ENCODE measurements at regions of chr1 and their contacts with region 1.

Region 1: DNA sequence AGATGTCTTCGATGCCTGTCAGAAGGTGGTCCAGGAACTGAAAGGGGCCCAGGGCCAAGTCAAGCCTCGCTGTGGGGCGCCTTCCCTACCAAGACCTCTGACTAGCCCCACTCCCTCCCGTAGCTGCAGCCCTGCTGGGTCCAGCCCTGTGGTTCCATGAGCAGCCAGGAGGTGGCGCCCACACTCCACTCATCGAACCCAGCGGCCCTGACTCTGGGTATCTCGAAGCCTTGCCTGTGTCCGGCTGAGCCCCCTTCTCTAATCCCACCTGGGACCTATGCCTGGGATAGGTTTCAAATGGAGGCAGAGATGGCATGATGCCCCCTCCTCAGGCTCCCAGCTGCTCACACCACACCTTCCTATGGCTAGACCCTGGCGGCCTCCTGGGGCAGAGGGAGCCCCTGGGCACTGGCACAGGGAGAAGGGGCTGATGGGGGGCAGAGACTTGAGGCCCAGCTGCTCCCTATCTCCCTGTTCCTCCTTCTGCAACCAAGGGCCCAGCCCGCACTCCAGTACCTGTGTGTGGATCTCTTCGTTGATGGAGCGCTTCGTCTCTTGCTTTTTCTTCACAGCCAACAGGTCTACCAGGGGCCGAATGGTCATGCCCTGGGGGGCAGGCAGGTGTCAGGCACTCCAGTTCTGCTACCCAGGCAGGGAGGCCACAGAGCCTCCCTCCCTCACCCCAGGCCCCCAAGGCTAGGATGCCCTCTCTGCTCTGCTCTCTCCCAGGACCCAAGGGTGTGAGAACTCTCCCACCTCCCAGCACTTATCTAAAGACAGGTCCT is 52.0 kb downstream of the SLC9A1 start:
- DNase-seq: peak; percentile 89
- ATAC-seq: peak; percentile 75
- H3K4me3 Mint-ChIP-seq: no peak overlapping the region
- H3K27ac Mint-ChIP-seq: no peak overlapping the region
- H3K4me1 Mint-ChIP-seq: peaks cover 23% of the 10 kb centered on the region
- H3K27me3 Mint-ChIP-seq: no peaks in the 10 kb centered on the region

Region 2: DNA sequence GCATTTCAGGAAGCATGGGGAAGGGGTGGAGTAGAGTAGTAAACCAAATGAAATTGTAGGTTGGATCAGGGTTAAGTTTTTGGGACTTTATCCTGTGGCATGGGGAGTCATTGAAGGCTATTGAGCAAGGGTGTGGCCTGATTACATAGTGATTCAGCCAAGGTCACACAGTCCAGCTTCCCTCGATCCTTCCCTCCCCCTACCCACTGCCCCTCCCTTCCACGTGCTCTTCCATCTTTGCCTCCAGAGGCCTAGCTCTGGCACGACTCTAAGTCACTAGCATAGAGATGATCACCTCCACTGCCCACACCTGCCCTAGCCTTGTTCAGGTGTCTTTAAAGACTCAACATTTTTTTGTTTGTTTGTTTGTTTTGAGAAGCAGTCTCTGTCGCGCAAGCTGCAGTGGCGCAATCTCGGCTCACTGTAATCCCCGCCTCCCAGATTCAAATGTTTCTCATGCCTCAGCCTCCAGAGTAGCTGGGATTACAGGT is 89.2 kb after region 1 on chr1:
- CTCF ChIA-PET with region 1: interaction called, 35 read pairs
- POLR2A ChIA-PET with region 1: no interaction called
- intact Hi-C with region 1: no loop called
- DNase-seq: no peak
- ATAC-seq: no peak
- H3K4me3 Mint-ChIP-seq: no peak overlapping the region
- H3K27ac Mint-ChIP-seq: no peak overlapping the region
- H3K4me1 Mint-ChIP-seq: no peaks in the 10 kb centered on the region
- H3K27me3 Mint-ChIP-seq: no peaks in the 10 kb centered on the region

Measured in activated CD4-positive, alpha-beta T cell treated with anti-CD3 and anti-CD28 coated beads for 36 hours (primary cell).